ENCODE measurements at regions of chr22 and their contacts with region 1.

Region 1: DNA sequence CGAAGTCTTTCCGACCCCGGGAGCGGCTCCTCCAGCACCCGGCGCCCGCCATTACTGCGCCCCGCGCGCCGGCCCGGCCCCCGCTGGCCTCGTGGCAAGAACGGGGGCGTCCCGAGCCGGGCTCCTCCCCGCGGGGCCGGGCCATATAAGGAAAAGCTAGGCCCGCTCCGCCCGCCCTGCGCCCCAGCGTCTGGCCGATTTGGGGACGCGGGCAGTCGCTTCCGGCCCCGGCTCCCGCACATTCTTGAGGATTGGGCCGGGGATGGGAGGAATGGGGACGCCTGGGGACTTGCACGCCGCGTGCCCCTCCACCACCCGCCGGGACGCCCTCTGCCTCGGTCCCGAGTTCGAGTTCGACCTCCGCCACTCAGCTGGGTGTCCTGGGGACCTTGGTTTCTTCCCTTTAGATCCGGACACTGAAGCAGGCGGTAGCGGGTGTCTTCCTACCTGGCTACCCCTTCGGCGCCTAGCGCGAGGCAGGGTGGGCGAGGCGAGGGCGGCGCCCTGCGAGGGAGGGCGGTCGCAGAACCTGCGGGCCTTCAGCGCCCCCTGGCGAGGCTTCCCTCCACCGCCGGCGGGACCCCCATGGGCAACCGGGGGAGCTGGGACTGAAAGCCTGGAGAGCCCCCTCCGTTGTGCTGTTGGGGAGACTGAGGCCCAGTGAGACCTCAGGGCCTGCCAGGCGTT is 3.8 kb downstream of the SMTN start:
- DNase-seq: peak; percentile 77 to 96 (median 87)
- H3K4me3 ChIP-seq: peak overlapping the region; percentile 65 to 88 (median 84)
- H3K27ac ChIP-seq: peak overlapping the region; percentile 94 to 97
- H3K4me1 ChIP-seq: peaks cover 0 to 48% (median 31%) of the 10 kb centered on the region in 3 donors
- H3K27me3 ChIP-seq: no peaks in the 10 kb centered on the region
- CTCF ChIP-seq: peak; percentile 64

Region 2: GRCh38 chr22:30947816-30948454 is 137.0 kb before region 1 on chr22:
- intact Hi-C with region 1: loop called (anchors 5 kb)
- DNase-seq: peak in 2 of 5 donors; percentile 61 to 82
- H3K4me3 ChIP-seq: no peak overlapping the region
- H3K27ac ChIP-seq: no peak overlapping the region
- H3K4me1 ChIP-seq: peaks cover 0 to 6% (median 2%) of the 10 kb centered on the region in 3 donors
- H3K27me3 ChIP-seq: no peaks in the 10 kb centered on the region
- CTCF ChIP-seq: peak; percentile 77

Region 3: DNA sequence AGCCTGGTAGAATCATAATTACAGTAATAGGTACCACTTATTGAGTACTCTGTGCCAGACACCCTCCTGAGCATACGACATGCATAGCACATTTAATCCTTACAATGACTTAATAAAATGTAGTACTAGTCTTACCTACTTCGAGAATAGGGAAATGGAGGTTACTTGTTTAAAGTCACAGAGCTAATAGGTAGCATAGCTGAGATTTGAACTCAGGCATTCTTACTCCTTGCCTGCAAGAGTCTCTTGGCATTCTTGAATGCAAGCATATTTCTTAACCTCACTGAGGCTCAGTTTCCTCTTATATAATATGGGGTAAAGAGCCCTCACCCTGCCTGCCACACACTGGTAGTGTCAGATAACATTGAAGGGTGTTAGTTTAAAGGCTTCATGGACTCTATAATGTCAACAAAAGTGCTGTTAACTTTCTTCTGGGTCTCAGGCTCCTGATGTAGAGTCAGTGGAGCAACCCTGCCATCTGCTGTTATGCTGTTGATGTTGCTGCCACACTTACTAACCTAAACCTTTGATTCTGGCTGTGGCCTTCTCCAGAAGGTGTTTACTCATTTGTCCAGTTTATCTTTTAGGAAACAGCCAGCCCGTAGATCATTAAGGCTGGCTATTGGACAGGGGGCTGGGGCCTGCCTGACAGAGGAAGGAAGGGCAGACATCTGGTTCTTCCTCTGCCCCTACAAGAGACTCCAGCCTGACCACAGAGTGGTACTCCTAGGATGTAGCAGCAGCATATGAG is 146.1 kb after region 1 on chr22:
- intact Hi-C with region 1: no loop called
- DNase-seq: peak in 4 of 5 donors; percentile 45 to 76 (median 58)
- H3K4me3 ChIP-seq: no peak overlapping the region
- H3K27ac ChIP-seq: peak overlapping the region in 1 of 2 donors; percentile 26
- H3K4me1 ChIP-seq: peaks cover 0 to 20% (median 14%) of the 10 kb centered on the region in 3 donors
- H3K27me3 ChIP-seq: no peaks in the 10 kb centered on the region
- CTCF ChIP-seq: peak; percentile 78